Naive thymus-derived CD4-positive, alpha-beta T cell (primary cell): ENCODE measurements at regions of chr10 and their contacts with region 1.

Region 1: GRCh38 chr10:4131407-4132228 is 346.6 kb upstream of the KLF6 start:
- DNase-seq: peak in 7 of 9 donors; percentile 31 to 65 (median 58)
- ATAC-seq: peak; percentile 90
- H3K4me3 ChIP-seq: peak overlapping the region; percentile 29
- H3K4me3 Mint-ChIP-seq: no peak overlapping the region
- H3K27ac ChIP-seq: no peak overlapping the region
- H3K27ac Mint-ChIP-seq: no peak overlapping the region
- H3K4me1 ChIP-seq: peaks cover 22 to 33% of the 10 kb centered on the region in 2 donors
- H3K4me1 Mint-ChIP-seq: peaks cover under 1 to 34% (median 8%) of the 10 kb centered on the region in 7 donors
- H3K27me3 ChIP-seq: no peaks in the 10 kb centered on the region
- H3K27me3 Mint-ChIP-seq: no peaks in the 10 kb centered on the region

Region 2: GRCh38 chr10:3226960-3227744 is 904.5 kb before region 1 on chr10:
- CTCF ChIA-PET with region 1: no interaction called
- POLR2A ChIA-PET with region 1: no interaction called
- intact Hi-C with region 1: loop called in 1 of 2 experiments (anchors 5 kb)
- DNase-seq: no peak
- ATAC-seq: no peak
- H3K4me3 ChIP-seq: no peak overlapping the region
- H3K4me3 Mint-ChIP-seq: no peak overlapping the region
- H3K27ac ChIP-seq: no peak overlapping the region
- H3K27ac Mint-ChIP-seq: peak overlapping the region in 1 of 9 donors; percentile 23
- H3K4me1 ChIP-seq: peaks cover 0 to 25% of the 10 kb centered on the region in 2 donors
- H3K4me1 Mint-ChIP-seq: peaks cover 6 to 14% (median 8%) of the 10 kb centered on the region in 7 donors
- H3K27me3 ChIP-seq: no peaks in the 10 kb centered on the region
- H3K27me3 Mint-ChIP-seq: peaks cover 0 to 31% (median 0%) of the 10 kb centered on the region in 5 donors

Region 3: DNA sequence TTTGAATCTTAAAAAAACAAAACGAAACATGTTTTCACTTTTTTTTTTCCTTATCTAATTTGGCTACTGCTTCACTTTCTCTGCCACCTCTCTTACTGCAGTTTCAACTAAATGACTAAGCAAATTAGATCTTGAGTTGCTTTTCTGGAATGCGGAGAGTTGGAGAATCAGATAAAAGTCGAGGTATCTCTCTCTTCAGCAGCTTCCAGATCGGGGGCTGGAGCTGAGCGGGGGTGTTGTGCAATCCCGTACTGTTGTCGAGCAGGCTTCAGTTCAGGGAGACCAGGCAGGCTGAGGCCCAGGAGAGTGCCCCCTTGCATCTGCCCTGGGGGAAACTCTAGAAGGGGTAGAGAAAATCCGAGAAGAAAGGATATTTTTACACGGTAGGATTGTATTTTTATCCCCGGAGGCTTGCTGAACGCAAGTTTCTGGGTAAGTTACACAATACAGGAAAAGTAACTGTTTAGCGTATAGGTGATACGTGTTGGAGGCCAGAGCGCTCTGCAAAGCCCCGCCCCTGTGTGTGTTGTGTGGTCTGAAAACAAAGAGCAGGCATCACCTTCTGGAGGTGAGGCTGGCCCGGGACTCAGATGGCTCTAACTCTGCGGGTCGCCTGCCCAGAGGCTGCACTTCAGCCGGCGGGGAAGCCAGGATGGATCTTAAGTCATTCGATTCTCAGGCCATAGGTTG is 463.2 kb before region 1 on chr10:
- CTCF ChIA-PET with region 1: no interaction called
- POLR2A ChIA-PET with region 1: no interaction called
- intact Hi-C with region 1: loop called in 1 of 2 experiments (anchors 5 kb)
- DNase-seq: peak; percentile 34 to 85 (median 77)
- ATAC-seq: peak; percentile 91
- H3K4me3 ChIP-seq: peak overlapping the region; percentile 63
- H3K4me3 Mint-ChIP-seq: peak overlapping the region; percentile 82 to 98 (median 88)
- H3K27ac ChIP-seq: peak overlapping the region; percentile 65
- H3K27ac Mint-ChIP-seq: peak overlapping the region; percentile 36 to 96 (median 93)
- H3K4me1 ChIP-seq: peaks cover 33% of the 10 kb centered on the region in 2 donors
- H3K4me1 Mint-ChIP-seq: peaks cover 27 to 51% (median 40%) of the 10 kb centered on the region in 7 donors
- H3K27me3 ChIP-seq: no peaks in the 10 kb centered on the region
- H3K27me3 Mint-ChIP-seq: no peaks in the 10 kb centered on the region

Region 4: GRCh38 chr10:3776796-3777571 is 354.6 kb before region 1 on chr10:
- CTCF ChIA-PET with region 1: no interaction called
- POLR2A ChIA-PET with region 1: no interaction called
- intact Hi-C with region 1: loop called in 1 of 2 experiments (anchors 5 kb)
- DNase-seq: peak in 7 of 9 donors; percentile 41 to 84 (median 67)
- ATAC-seq: peak; percentile 31
- H3K4me3 ChIP-seq: no peak overlapping the region
- H3K4me3 Mint-ChIP-seq: peak overlapping the region in 9 of 10 donors; percentile 7 to 81 (median 51)
- H3K27ac ChIP-seq: peak overlapping the region; percentile 70
- H3K27ac Mint-ChIP-seq: peak overlapping the region; percentile 59 to 99 (median 83)
- H3K4me1 ChIP-seq: peaks cover 53 to 71% of the 10 kb centered on the region in 2 donors
- H3K4me1 Mint-ChIP-seq: peaks cover 50 to 66% (median 64%) of the 10 kb centered on the region in 7 donors
- H3K27me3 ChIP-seq: no peaks in the 10 kb centered on the region
- H3K27me3 Mint-ChIP-seq: no peaks in the 10 kb centered on the region

Region 5: DNA sequence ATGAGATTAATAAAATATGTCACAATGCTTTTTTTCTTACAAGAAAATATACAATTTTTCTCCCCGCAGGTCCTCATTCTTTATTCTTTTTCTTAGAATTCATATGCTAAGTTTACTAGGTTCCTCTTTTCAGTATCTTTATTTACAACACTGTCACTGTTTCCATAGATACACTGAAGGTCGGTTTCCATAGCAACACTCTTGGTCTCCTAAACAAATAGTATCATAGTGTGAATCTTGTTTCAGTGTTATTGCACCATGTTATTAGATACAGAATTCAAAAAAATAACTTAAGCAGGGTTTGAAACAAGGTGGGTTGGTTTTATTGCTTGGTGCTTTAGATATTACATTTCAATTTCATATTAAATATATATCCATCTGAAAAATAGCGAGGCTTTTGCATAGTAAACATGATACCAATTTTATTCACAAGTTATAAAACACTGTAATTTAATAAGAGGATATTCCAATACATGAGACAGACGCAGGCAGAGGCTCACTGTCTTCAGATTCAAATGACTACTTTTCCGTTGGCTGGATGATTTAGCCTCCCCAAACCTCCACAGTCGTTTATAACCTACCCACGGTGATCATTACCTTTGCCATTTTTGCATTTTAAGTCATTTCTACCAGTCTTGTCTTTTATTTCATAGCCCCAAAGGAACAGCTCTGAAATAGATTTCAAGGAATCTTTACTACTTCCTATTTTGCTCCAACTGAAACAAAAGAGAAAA is 257.7 kb before region 1 on chr10:
- CTCF ChIA-PET with region 1: no interaction called
- POLR2A ChIA-PET with region 1: no interaction called
- intact Hi-C with region 1: loop called in 1 of 2 experiments (anchors 5 kb)
- DNase-seq: peak in 8 of 9 donors; percentile 8 to 85 (median 74)
- ATAC-seq: peak; percentile 77
- H3K4me3 ChIP-seq: no peak overlapping the region
- H3K4me3 Mint-ChIP-seq: peak overlapping the region in 7 of 10 donors; percentile 14 to 73 (median 46)
- H3K27ac ChIP-seq: peak overlapping the region; percentile 65
- H3K27ac Mint-ChIP-seq: peak overlapping the region; percentile 87 to 95 (median 91)
- H3K4me1 ChIP-seq: peaks cover 41 to 51% of the 10 kb centered on the region in 2 donors
- H3K4me1 Mint-ChIP-seq: peaks cover 30 to 59% (median 57%) of the 10 kb centered on the region in 7 donors
- H3K27me3 ChIP-seq: no peaks in the 10 kb centered on the region
- H3K27me3 Mint-ChIP-seq: no peaks in the 10 kb centered on the region

Region 6: DNA sequence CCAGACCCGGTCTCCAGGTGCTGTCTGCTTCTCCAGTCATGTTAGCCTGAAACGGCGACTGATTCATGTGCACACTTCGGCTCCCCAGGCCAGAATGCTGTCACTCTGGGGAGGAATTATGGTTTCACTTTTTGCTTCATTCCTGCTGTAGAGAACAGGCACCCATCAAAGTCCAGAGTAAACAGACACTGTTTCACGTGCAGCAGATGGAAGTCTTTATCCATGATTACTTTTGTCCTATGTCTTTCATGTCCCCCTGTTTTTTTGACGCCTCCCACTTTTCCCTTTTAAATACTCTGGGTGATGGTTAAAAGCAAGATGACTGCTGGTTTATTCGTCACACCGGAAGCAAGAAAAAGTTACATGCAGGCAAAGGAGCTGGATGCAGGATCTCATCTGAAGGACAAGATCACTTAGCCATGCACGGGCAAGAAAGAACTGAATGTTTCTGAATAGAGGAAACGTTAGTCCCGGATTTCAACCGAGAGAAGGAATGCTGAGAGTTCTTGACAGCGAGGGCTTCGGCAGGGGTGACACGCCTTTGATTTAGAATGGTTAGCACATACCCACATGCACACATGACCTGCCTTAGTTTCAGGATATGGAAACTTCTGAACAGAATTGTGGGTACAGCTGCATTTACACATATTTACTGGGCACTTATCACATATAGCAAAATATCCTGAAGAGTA is 96.6 kb before region 1 on chr10:
- CTCF ChIA-PET with region 1: no interaction called
- POLR2A ChIA-PET with region 1: interaction called, 4 read pairs
- intact Hi-C with region 1: loop called in 1 of 2 experiments (anchors 1 kb)
- DNase-seq: peak in 7 of 9 donors; percentile 6 to 41 (median 30)
- ATAC-seq: peak; percentile 78
- H3K4me3 ChIP-seq: peak overlapping the region; percentile 44
- H3K4me3 Mint-ChIP-seq: peak overlapping the region; percentile 73 to 91 (median 82)
- H3K27ac ChIP-seq: peak overlapping the region; percentile 22
- H3K27ac Mint-ChIP-seq: peak overlapping the region; percentile 67 to 91 (median 82)
- H3K4me1 ChIP-seq: peaks cover 4 to 11% of the 10 kb centered on the region in 2 donors
- H3K4me1 Mint-ChIP-seq: peaks cover 8 to 37% (median 17%) of the 10 kb centered on the region in 7 donors
- H3K27me3 ChIP-seq: no peaks in the 10 kb centered on the region
- H3K27me3 Mint-ChIP-seq: no peaks in the 10 kb centered on the region

Region 7: GRCh38 chr10:4088354-4089066 is 43.1 kb before region 1 on chr10:
- CTCF ChIA-PET with region 1: no interaction called
- POLR2A ChIA-PET with region 1: no interaction called
- intact Hi-C with region 1: no loop called
- DNase-seq: no peak
- ATAC-seq: no peak
- H3K4me3 ChIP-seq: no peak overlapping the region
- H3K4me3 Mint-ChIP-seq: no peak overlapping the region
- H3K27ac ChIP-seq: no peak overlapping the region
- H3K27ac Mint-ChIP-seq: no peak overlapping the region
- H3K4me1 ChIP-seq: no peaks in the 10 kb centered on the region
- H3K4me1 Mint-ChIP-seq: peaks cover 0 to 2% (median 0%) of the 10 kb centered on the region in 7 donors
- H3K27me3 ChIP-seq: no peaks in the 10 kb centered on the region
- H3K27me3 Mint-ChIP-seq: peaks cover 0 to 2% (median 0%) of the 10 kb centered on the region in 5 donors

Region 8: GRCh38 chr10:4151466-4151865 is 19.8 kb after region 1 on chr10:
- CTCF ChIA-PET with region 1: no interaction called
- POLR2A ChIA-PET with region 1: no interaction called
- intact Hi-C with region 1: no loop called
- DNase-seq: no peak
- ATAC-seq: no peak
- H3K4me3 ChIP-seq: no peak overlapping the region
- H3K4me3 Mint-ChIP-seq: no peak overlapping the region
- H3K27ac ChIP-seq: no peak overlapping the region
- H3K27ac Mint-ChIP-seq: no peak overlapping the region
- H3K4me1 ChIP-seq: peaks cover 0 to 3% of the 10 kb centered on the region in 2 donors
- H3K4me1 Mint-ChIP-seq: peaks cover 6 to 20% (median 15%) of the 10 kb centered on the region in 7 donors
- H3K27me3 ChIP-seq: no peaks in the 10 kb centered on the region
- H3K27me3 Mint-ChIP-seq: no peaks in the 10 kb centered on the region

Region 9: DNA sequence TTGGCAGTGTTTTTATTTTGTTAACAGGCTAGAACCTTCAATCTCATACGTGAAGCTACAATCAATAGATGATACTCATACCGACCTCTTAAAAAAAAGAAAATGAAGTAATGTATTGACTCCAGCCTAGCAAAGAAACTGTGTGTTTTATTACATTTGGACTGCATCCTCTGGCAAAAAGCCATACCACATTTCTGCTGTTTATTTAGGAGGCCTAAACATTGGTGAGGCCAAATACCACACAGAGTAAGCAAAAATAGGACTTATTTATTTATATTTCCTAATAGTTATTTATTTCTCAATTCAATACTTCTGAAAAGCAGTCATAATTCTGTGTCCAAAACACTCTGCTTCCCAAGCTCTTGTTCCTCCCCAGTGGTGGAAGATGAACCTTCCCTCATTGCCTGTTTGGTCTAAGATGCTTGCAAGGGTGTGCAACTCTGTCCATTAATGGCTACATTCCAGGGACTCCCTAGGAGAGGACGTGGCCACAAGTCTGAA is 52.2 kb after region 1 on chr10:
- CTCF ChIA-PET with region 1: no interaction called
- POLR2A ChIA-PET with region 1: no interaction called
- intact Hi-C with region 1: loop called in 1 of 2 experiments (anchors 2 kb)
- DNase-seq: no peak
- ATAC-seq: no peak
- H3K4me3 ChIP-seq: no peak overlapping the region
- H3K4me3 Mint-ChIP-seq: no peak overlapping the region
- H3K27ac ChIP-seq: no peak overlapping the region
- H3K27ac Mint-ChIP-seq: no peak overlapping the region
- H3K4me1 ChIP-seq: no peaks in the 10 kb centered on the region
- H3K4me1 Mint-ChIP-seq: peaks cover 0 to 32% (median 3%) of the 10 kb centered on the region in 7 donors
- H3K27me3 ChIP-seq: no peaks in the 10 kb centered on the region
- H3K27me3 Mint-ChIP-seq: no peaks in the 10 kb centered on the region

Region 10: DNA sequence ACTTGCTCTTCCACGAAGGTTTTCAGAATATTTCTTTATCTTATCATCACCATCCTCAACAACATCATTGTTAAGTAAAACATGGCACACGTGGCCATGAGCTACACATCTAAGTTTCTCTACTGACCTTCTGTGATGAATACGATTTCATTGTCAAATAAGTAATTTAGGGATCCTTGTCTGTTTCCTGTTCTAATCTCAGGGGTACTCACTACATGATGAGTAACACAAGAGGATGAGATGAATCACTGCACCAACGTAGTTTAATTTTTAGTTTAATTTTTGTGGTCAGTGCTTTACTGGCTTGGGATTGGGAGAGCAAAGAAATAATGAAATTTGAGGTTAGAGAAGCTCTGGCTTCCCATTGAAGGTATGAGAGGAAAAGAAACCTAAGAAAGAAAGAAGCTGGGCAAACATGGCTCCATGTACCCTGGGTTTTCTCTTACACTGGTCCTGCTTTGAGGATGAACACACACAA is 115.3 kb after region 1 on chr10:
- CTCF ChIA-PET with region 1: no interaction called
- POLR2A ChIA-PET with region 1: no interaction called
- intact Hi-C with region 1: no loop called
- DNase-seq: no peak
- ATAC-seq: no peak
- H3K4me3 ChIP-seq: no peak overlapping the region
- H3K4me3 Mint-ChIP-seq: no peak overlapping the region
- H3K27ac ChIP-seq: no peak overlapping the region
- H3K27ac Mint-ChIP-seq: no peak overlapping the region
- H3K4me1 ChIP-seq: no peaks in the 10 kb centered on the region
- H3K4me1 Mint-ChIP-seq: peaks cover 0 to 38% (median 6%) of the 10 kb centered on the region in 7 donors
- H3K27me3 ChIP-seq: no peaks in the 10 kb centered on the region
- H3K27me3 Mint-ChIP-seq: no peaks in the 10 kb centered on the region